CD4-positive, alpha-beta T cell (primary cell): ENCODE measurements at regions of chr14 and their contacts with region 1.

Region 1: DNA sequence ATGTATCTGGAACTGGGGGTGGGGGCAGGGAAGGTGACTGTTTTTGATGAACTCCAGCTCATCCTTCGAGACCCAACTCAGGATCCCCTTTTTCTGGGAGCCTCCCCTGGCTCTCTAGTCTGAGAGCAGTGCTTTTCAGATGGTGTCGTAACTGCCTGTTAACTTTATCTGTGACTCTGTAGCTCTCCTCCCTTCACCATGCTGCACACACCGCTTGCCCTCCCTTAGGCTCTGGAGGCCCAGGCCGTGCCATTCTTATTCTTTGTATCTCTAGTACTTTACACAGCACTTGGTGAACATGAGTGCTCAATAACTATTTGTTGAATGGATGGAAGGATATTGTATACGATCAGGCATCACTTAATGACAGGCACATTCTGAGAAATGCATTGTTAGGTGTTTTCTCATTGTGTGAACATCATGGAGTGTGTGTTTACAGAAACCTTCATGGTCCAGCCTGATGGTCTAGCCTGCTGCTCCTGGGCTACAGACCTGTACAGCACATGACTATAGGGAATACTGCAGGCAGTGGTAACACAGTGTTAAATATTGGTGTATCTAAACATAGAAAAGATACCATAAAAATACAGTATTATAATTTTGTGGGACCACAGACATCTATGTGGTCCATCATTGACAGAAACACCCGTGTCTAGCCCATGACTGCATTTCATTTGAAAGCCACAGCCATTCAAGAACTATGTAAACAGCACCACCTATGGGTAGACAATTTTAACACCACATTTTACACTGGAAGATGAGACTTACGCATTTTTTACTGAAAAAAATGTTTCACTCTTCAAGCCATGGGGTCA is 91.8 kb downstream of the EML1 start:
- DNase-seq: peak in 5 of 14 experiments; percentile 7 to 74 (median 66)
- ATAC-seq: peak; percentile 80
- H3K4me3 ChIP-seq: no peak overlapping the region
- H3K4me3 Mint-ChIP-seq: no peak overlapping the region
- H3K27ac ChIP-seq: no peak overlapping the region
- H3K27ac Mint-ChIP-seq: no peak overlapping the region
- H3K4me1 ChIP-seq: no peaks in the 10 kb centered on the region
- H3K4me1 Mint-ChIP-seq: no peaks in the 10 kb centered on the region
- H3K27me3 ChIP-seq: peaks cover 2 to 12% of the 10 kb centered on the region in 2 experiments
- H3K27me3 Mint-ChIP-seq: peaks cover 16% of the 10 kb centered on the region
- CTCF ChIP-seq: peak; percentile 85

Region 2: GRCh38 chr14:99320105-99320572 is 564.9 kb before region 1 on chr14:
- CTCF ChIA-PET with region 1: no interaction called
- POLR2A ChIA-PET with region 1: no interaction called
- intact Hi-C with region 1: loop called in 1 of 2 experiments (anchors 5 kb)
- DNase-seq: peak; percentile 40 to 86 (median 58)
- ATAC-seq: peak; percentile 88
- H3K4me3 ChIP-seq: no peak overlapping the region
- H3K4me3 Mint-ChIP-seq: no peak overlapping the region
- H3K27ac ChIP-seq: no peak overlapping the region
- H3K27ac Mint-ChIP-seq: no peak overlapping the region
- H3K4me1 ChIP-seq: peaks cover 10% of the 10 kb centered on the region
- H3K4me1 Mint-ChIP-seq: peaks cover 7% of the 10 kb centered on the region
- H3K27me3 ChIP-seq: no peaks in the 10 kb centered on the region
- H3K27me3 Mint-ChIP-seq: peaks cover under 1% of the 10 kb centered on the region
- CTCF ChIP-seq: peak; percentile 82

Region 3: DNA sequence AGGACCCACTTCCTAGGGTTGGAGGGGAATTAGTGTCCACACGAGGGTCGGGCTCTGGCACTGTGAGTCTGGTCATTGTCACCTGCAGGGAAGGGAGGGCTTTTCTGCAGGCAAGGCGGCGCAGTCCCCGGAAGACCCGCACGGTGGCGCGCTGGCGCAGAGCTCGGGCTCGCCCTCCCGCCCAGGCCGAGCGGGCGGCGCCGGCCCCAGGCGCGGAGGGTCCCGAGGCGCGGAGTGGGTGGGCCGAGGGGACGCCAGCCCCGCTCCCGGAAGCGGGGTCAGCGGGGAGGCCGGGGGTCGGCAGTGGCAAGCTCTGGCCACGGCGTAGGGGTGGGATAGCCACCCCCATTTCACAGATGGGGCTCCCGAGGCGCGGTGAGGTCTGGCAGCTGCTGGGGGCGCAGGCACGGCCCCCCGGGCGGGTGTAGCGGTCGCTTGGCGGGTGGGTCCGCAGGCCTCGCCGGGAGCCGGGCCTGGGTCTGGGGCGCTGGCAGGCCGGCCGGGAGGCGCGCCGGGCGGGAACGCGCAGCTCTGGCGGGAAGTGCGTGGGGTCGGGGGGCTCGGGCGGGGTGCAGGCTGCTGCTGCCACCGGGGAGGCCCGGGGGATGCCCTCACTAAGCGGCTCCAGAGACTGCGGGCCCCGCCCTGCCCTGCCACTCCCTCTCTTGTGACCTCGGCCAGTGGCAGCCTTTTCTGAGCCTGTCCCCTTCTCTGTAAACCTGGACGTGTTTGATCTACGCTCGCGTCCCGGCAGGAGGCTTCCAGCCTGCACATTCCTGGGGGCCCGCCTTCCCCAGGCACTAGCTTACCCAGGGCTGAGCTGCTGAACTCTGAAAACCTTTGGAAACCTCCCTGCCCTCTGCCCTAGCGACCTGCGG is 154.8 kb before region 1 on chr14:
- CTCF ChIA-PET with region 1: interaction called, 14 read pairs
- POLR2A ChIA-PET with region 1: interaction called, 3 read pairs
- intact Hi-C with region 1: loop called (anchors 1 kb)
- DNase-seq: peak; percentile 39 to 76 (median 64)
- ATAC-seq: peak; percentile 94
- H3K4me3 ChIP-seq: no peak overlapping the region
- H3K4me3 Mint-ChIP-seq: no peak overlapping the region
- H3K27ac ChIP-seq: no peak overlapping the region
- H3K27ac Mint-ChIP-seq: no peak overlapping the region
- H3K4me1 ChIP-seq: no peaks in the 10 kb centered on the region
- H3K4me1 Mint-ChIP-seq: no peaks in the 10 kb centered on the region
- H3K27me3 ChIP-seq: peaks cover 31 to 42% of the 10 kb centered on the region in 2 experiments
- H3K27me3 Mint-ChIP-seq: peaks cover 45% of the 10 kb centered on the region
- CTCF ChIP-seq: peak; percentile 62